ENCODE measurements at regions of chr6 and their contacts with region 1.

Region 1: DNA sequence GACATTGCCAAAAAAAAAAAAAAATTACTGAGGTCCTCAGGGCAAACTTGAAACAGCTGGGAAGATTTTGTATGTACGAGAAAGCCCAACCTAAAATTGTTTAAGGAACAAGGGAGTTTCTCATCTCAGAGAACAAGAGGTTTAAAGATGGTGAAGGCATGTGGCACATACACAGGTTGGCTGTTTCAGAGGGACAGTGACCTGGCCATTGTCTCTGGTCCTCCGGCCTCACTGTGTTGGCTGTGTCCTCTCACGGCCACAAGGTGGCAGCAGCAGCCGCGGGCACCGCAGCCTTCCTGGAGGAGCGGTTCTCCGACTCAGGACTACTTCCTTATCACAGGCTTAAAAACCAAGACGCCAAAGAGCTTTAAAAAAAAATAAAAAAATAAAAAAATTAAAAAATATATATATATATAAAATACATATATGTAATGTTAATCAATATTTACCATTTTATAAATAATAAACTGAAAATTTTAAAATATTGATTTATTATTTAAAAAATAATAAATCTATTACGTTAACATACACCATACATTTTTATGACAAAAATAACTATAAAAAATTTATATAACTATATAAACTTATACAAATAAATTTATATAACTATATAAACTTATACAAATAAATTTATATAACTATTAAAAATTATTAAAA is 52.8 kb downstream of the GTF2H5 start:
- DNase-seq: peak; percentile 78
- H3K4me3 ChIP-seq: no peak overlapping the region
- H3K27ac ChIP-seq: no peak overlapping the region
- H3K4me1 ChIP-seq: no peaks in the 10 kb centered on the region
- H3K27me3 ChIP-seq: no peaks in the 10 kb centered on the region
- CTCF ChIP-seq: peak; percentile 79 to 94
- POLR2A ChIP-seq: no peak

Region 2: DNA sequence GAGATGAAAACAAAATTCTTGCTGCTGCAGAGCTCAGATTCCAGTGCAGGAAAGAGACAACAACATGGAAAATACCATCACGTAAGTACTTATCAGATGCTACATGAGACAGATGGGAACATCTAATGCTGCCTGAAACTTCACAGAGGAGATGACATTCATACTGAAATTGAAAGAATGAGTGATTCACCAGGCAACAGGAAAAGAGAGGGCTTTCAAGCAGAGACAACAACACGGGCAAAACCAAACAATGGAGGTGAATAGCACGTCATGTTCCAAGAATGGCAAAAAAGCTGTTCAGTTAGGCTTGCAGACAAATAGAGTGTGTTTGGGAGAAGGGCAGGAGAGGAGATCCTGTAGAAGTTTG is 13.5 kb before region 1 on chr6:
- CTCF ChIA-PET with region 1: interaction called, 21 read pairs
- POLR2A ChIA-PET with region 1: no interaction called
- dilution Hi-C with region 1: no loop called
- intact Hi-C with region 1: no loop called
- DNase-seq: peak; percentile 87
- H3K4me3 ChIP-seq: peak overlapping the region in 1 of 3 experiments; percentile 2
- H3K27ac ChIP-seq: peak overlapping the region; percentile 96
- H3K4me1 ChIP-seq: peaks cover 26% of the 10 kb centered on the region
- H3K27me3 ChIP-seq: no peaks in the 10 kb centered on the region
- CTCF ChIP-seq: no peak
- POLR2A ChIP-seq: no peak

Region 3: GRCh38 chr6:158417760-158418098 is 196.8 kb after region 1 on chr6:
- CTCF ChIA-PET with region 1: interaction called, 11 read pairs
- POLR2A ChIA-PET with region 1: no interaction called
- dilution Hi-C with region 1: no loop called
- intact Hi-C with region 1: no loop called
- DNase-seq: peak; percentile 71
- H3K4me3 ChIP-seq: no peak overlapping the region
- H3K27ac ChIP-seq: peak overlapping the region; percentile 51
- H3K4me1 ChIP-seq: peaks cover 17% of the 10 kb centered on the region
- H3K27me3 ChIP-seq: no peaks in the 10 kb centered on the region
- CTCF ChIP-seq: no peak
- POLR2A ChIP-seq: no peak

Region 4: GRCh38 chr6:158488065-158488464 is 267.2 kb after region 1 on chr6:
- CTCF ChIA-PET with region 1: interaction called, 16 read pairs
- POLR2A ChIA-PET with region 1: no interaction called
- dilution Hi-C with region 1: no loop called
- intact Hi-C with region 1: no loop called
- DNase-seq: peak; percentile 71
- H3K4me3 ChIP-seq: no peak overlapping the region
- H3K27ac ChIP-seq: peak overlapping the region; percentile 47
- H3K4me1 ChIP-seq: peaks cover 11% of the 10 kb centered on the region
- H3K27me3 ChIP-seq: no peaks in the 10 kb centered on the region
- CTCF ChIP-seq: no peak
- POLR2A ChIP-seq: no peak

Region 5: GRCh38 chr6:158518191-158519127 is 297.5 kb after region 1 on chr6:
- CTCF ChIA-PET with region 1: interaction called, 58 read pairs
- POLR2A ChIA-PET with region 1: no interaction called
- dilution Hi-C with region 1: no loop called
- intact Hi-C with region 1: loop called (anchors 1 kb)
- DNase-seq: peak; percentile 71
- H3K4me3 ChIP-seq: peak overlapping the region in 2 of 3 experiments; percentile 17 to 23
- H3K27ac ChIP-seq: no peak overlapping the region
- H3K4me1 ChIP-seq: peaks cover 15% of the 10 kb centered on the region
- H3K27me3 ChIP-seq: no peaks in the 10 kb centered on the region
- CTCF ChIP-seq: peak; percentile 51 to 54
- POLR2A ChIP-seq: no peak

Region 6: DNA sequence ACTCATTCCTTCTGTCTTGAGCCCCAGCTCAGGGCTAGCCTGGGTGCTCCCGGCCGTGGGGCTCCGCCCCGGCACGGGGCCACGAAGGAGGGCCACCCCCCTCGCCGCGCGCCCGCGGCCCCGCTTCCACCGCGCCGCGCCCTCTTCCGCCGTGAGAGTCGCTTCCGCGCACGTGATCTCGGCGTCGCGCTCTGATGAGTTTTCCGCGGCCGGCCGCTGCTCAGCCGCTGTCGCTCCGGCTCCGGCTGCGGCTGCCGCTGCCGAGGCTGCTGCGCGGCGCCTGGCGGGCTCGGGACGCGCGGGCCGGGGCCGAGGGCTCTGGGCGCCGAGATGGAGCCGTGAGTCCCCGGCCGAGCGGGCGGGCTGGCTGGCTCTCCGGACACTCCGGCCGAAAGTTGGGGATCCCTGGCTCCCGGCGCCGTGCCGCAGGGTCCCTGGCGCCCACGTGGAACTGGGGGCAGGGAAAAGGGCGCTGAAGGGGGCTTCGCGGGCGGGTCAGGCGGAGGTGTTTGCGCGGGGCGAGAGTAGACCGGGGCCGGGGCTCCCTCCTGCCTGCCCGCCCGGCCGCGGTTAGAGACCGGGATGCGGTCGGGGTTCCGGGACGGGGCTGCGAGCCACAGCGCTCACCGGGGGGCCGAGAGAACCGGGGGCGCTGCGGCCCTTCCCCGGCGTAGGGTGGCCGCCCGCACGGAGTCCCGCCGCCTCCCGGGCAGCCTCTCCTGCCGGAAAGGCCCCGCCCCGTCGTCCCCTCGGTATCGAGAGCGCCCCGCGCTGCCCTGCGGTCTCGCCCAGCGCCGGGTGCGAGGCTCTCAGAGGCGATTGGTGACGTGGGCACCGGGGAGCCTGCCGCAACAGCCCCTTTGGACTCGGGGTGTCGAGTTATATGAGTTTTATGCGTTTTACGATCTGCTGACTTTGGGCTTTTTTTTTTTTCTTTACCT is 339.3 kb after region 1 on chr6 and contains the start of gene TMEM181:
- CTCF ChIA-PET with region 1: interaction called, 14 read pairs
- POLR2A ChIA-PET with region 1: no interaction called
- dilution Hi-C with region 1: no loop called
- intact Hi-C with region 1: loop called (anchors 1 kb)
- DNase-seq: peak; percentile 80
- H3K4me3 ChIP-seq: peak within 1 kb of the TSS; percentile 40 to 73 (median 53)
- H3K27ac ChIP-seq: peak within 1 kb of the TSS; percentile 82
- H3K4me1 ChIP-seq: peaks cover 45% of the 10 kb centered on the region
- H3K27me3 ChIP-seq: no peaks in the 10 kb centered on the region
- CTCF ChIP-seq: no peak
- POLR2A ChIP-seq: peak; percentile 86
- total RNA-seq, gene TMEM181: 33.5 and 34.5 TPM in 2 replicates

Region 7: DNA sequence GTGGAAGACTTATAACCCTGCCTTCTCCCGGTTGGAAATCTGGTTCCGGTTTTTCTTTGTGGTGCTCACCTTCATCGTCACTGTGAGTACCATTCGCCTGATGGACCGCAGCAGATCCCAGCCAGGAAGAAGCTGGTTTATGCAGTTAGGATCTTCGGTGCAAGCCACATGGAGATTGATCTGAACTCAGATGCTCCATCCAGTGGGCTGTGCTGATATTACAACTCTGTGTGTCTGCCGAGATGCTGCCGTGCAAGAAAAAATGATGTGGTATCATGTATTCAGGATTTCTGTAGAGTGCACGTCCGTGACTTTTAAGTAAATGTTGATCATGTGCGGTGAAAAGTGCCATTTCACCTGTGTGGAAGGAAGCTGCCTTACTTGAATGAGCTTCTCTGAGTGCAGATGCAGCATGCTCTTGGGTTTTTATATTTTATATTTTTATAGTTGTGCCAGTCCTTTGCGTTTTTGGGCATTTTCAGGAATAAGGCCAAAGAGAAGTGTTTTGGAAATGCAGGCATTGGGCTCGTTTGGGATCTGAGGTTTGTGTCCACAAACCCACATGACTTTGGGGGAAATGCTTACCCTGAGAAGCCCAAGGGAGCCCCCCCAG is 384.5 kb after region 1 on chr6:
- CTCF ChIA-PET with region 1: interaction called, 154 read pairs
- POLR2A ChIA-PET with region 1: no interaction called
- dilution Hi-C with region 1: no loop called
- intact Hi-C with region 1: loop called (anchors 1 kb)
- DNase-seq: peak; percentile 85
- H3K4me3 ChIP-seq: no peak overlapping the region
- H3K27ac ChIP-seq: no peak overlapping the region
- H3K4me1 ChIP-seq: no peaks in the 10 kb centered on the region
- H3K27me3 ChIP-seq: no peaks in the 10 kb centered on the region
- CTCF ChIP-seq: peak; percentile 68 to 72
- POLR2A ChIP-seq: no peak

Measured in endothelial cell of umbilical vein (primary cell).